CD4-positive, alpha-beta T cell (primary cell): ENCODE measurements at regions of chr1 and their contacts with region 1.

Region 1: GRCh38 chr1:200877839-200878551 is 5.2 kb downstream of the GPR25 start:
- DNase-seq: peak in 7 of 14 experiments; percentile 25 to 72 (median 45)
- ATAC-seq: peak; percentile 72
- H3K4me3 ChIP-seq: peak overlapping the region; percentile 1
- H3K4me3 Mint-ChIP-seq: peak overlapping the region; percentile 69
- H3K27ac ChIP-seq: peak overlapping the region in 1 of 2 donors; percentile 53
- H3K27ac Mint-ChIP-seq: peak overlapping the region; percentile 88
- H3K4me1 ChIP-seq: peaks cover 56% of the 10 kb centered on the region
- H3K4me1 Mint-ChIP-seq: peaks cover 42% of the 10 kb centered on the region
- H3K27me3 ChIP-seq: peaks cover under 1 to 4% of the 10 kb centered on the region in 2 experiments
- H3K27me3 Mint-ChIP-seq: peaks cover 23% of the 10 kb centered on the region
- CTCF ChIP-seq: no peak

Region 2: GRCh38 chr1:200866521-200866920 is 11.5 kb before region 1 on chr1:
- CTCF ChIA-PET with region 1: interaction called, 3 read pairs
- POLR2A ChIA-PET with region 1: interaction called, 18 read pairs
- intact Hi-C with region 1: no loop called
- DNase-seq: peak in 2 of 14 experiments; percentile 23 to 36
- ATAC-seq: no peak
- H3K4me3 ChIP-seq: no peak overlapping the region
- H3K4me3 Mint-ChIP-seq: no peak overlapping the region
- H3K27ac ChIP-seq: no peak overlapping the region
- H3K27ac Mint-ChIP-seq: peak overlapping the region; percentile 68
- H3K4me1 ChIP-seq: peaks cover 45% of the 10 kb centered on the region
- H3K4me1 Mint-ChIP-seq: peaks cover 68% of the 10 kb centered on the region
- H3K27me3 ChIP-seq: no peaks in the 10 kb centered on the region
- H3K27me3 Mint-ChIP-seq: peaks cover 11% of the 10 kb centered on the region
- CTCF ChIP-seq: no peak